OCI-LY7 (cell line): ENCODE measurements at regions of chr6 and their contacts with region 1.

Region 1: DNA sequence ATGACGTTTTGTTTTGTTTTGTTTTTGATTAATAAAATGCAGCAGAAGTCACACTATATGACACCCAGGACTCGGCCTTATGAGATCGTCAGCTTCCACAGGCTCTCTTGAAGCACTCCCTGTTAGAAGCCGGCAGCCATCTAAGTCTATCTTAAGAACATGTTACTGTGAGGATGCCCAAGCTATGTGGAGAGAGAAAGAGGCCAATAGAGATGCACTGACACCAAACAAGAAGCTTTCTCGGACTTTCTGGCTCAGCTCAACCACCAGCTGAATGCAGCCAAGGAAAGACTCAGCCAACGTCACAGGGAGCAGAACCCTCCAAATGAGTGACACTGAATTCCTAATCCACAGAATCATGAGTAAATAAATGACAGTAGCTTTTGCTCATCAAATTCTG is 14.0 kb downstream of the SGK1 start:
- DNase-seq: no peak
- H3K4me3 ChIP-seq: no peak overlapping the region
- H3K27ac ChIP-seq: no peak overlapping the region
- H3K4me1 ChIP-seq: no peaks in the 10 kb centered on the region
- CTCF ChIP-seq: no peak

Region 2: DNA sequence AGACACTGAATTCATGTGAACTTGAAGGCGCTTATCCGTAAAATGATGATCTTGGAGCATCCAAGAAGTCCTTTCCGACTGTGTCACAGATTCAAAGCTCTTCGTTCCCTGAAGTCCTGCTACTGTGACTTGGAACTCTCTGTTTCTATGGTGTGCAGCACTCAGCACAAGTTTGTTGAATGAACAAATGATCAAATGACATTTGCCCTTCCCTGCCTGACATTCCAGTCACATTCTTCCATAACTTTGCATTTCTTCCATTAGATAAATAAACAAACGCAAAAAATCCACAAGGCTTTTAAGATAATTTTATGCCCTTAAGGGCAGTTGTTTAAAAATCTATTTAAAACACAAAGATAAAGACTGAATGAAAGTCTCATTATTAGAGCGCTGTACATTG is 25.9 kb before region 1 on chr6:
- CTCF ChIA-PET with region 1: no interaction called
- POLR2A ChIA-PET with region 1: interaction called, 15 read pairs
- intact Hi-C with region 1: no loop called
- DNase-seq: no peak
- H3K4me3 ChIP-seq: no peak overlapping the region
- H3K27ac ChIP-seq: no peak overlapping the region
- H3K4me1 ChIP-seq: no peaks in the 10 kb centered on the region
- CTCF ChIP-seq: no peak

Region 3: DNA sequence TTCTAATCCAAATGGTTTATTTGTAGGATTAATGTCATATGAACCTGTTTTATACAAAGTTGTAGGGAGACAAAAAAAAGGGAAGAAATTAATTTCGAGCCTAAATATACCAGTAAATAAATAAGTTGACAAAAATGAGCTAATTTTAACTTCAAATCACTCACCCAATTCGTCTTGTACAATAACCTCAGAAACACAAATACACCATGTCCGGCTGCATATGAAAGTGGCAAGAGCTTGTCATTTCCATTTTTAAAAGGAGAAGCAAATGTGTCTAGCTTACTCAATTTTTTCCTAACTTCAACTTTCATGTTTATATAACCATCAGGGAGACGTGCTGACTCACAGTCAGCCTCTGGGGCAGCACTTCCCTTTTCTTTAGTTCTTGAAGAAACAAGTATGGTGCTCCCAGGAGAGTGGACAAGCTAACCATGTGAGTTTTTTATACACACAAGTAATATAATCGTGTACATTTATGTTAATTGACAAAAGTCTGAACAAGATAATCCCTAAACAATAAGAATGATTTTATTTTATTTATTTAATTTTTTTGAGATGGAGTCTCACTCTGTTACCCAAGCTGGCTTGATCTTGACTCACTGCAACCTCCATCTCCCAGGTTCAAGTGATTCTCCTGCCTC is 69.5 kb after region 1 on chr6:
- CTCF ChIA-PET with region 1: no interaction called
- POLR2A ChIA-PET with region 1: no interaction called
- intact Hi-C with region 1: no loop called
- DNase-seq: peak; percentile 39
- H3K4me3 ChIP-seq: no peak overlapping the region
- H3K27ac ChIP-seq: no peak overlapping the region
- H3K4me1 ChIP-seq: peaks cover 8% of the 10 kb centered on the region
- CTCF ChIP-seq: no peak